ENCODE measurements at regions of chr5 and their contacts with region 1.

Region 1: GRCh38 chr5:140073296-140073695 is 30.2 kb upstream of the NRG2 start:
- DNase-seq: no peak
- ATAC-seq: no peak
- H3K4me3 Mint-ChIP-seq: no peak overlapping the region
- H3K27ac Mint-ChIP-seq: no peak overlapping the region
- H3K4me1 Mint-ChIP-seq: no peaks in the 10 kb centered on the region
- H3K27me3 Mint-ChIP-seq: peaks cover 30% of the 10 kb centered on the region

Region 2: GRCh38 chr5:140131967-140132409 is 58.7 kb after region 1 on chr5:
- CTCF ChIA-PET with region 1: interaction called, 15 read pairs
- POLR2A ChIA-PET with region 1: no interaction called
- DNase-seq: peak; percentile 22
- ATAC-seq: peak; percentile 82
- H3K4me3 Mint-ChIP-seq: no peak overlapping the region
- H3K27ac Mint-ChIP-seq: peak overlapping the region; percentile 5
- H3K4me1 Mint-ChIP-seq: peaks cover 39% of the 10 kb centered on the region
- H3K27me3 Mint-ChIP-seq: peaks cover 1% of the 10 kb centered on the region

Region 3: GRCh38 chr5:140157032-140157803 is 83.9 kb after region 1 on chr5:
- CTCF ChIA-PET with region 1: interaction called, 40 read pairs
- POLR2A ChIA-PET with region 1: no interaction called
- DNase-seq: peak; percentile 90
- ATAC-seq: peak; percentile 98
- H3K4me3 Mint-ChIP-seq: peak overlapping the region; percentile 34
- H3K27ac Mint-ChIP-seq: peak overlapping the region; percentile 49
- H3K4me1 Mint-ChIP-seq: peaks cover 9% of the 10 kb centered on the region
- H3K27me3 Mint-ChIP-seq: peaks cover 6% of the 10 kb centered on the region